PC-3 (cell line): ENCODE measurements at regions of chr13 and their contacts with region 1.

Region 1: DNA sequence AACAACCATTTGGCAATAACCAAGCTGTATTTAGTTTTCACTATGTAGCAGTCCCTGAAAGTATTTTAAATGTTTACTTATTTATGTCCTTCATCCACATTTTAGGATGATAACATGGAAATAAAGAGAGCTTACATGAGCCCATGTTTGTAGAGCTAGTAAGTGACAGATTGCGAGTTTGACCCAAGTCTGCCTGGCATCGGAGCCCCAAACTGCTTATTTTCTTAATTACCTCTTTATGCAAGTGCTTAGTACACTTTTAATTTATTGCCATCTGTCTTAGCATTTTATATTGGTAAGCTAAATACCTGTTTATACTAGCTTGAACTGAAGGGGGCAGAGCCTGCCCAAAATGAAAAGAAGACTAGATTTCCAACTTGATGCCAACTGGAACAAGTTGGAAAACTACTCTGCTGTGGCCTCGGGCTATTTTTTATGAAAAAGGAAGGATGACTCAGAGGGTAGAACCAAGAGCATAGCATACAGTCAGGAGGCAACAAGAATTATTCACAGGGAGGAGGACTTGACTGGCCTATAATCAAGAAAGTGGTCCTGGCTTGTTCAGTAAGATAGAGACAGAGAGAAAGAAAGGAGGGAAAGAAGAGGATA is 150.2 kb downstream of the NDFIP2 start:
- DNase-seq: peak; percentile 95
- ATAC-seq: peak; percentile 99
- H3K4me3 ChIP-seq: no peak overlapping the region
- H3K27ac ChIP-seq: no peak overlapping the region
- H3K4me1 ChIP-seq: peaks cover 4% of the 10 kb centered on the region; the same call in 1 of the 2 replicates
- H3K27me3 ChIP-seq: no peaks in the 10 kb centered on the region
- CTCF ChIP-seq: peak; percentile 70

Region 2: DNA sequence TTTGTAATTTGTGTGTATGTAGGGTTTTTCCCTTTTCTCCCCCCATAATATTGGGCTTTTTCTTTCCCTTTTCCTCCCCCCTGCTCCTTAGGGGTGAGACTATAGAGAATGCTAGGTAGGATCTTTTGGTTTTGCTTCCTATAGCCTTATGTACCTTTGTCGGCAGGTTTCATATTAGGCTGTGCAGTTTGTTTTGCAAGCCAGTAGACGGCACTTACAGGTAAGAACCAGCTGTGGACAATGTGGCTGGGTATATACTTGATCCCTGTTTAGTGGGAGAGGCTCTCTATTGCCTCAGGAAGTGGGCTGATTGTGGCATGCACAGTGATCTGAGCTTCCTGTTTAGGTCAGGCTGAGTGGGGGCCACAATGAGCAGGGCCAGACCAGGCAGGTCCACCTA is 613.0 kb before region 1 on chr13:
- CTCF ChIA-PET with region 1: no interaction called
- POLR2A ChIA-PET with region 1: no interaction called
- intact Hi-C with region 1: no loop called
- DNase-seq: no peak
- ATAC-seq: no peak
- H3K4me3 ChIP-seq: no peak overlapping the region
- H3K27ac ChIP-seq: no peak overlapping the region
- H3K4me1 ChIP-seq: no peaks in the 10 kb centered on the region
- H3K27me3 ChIP-seq: 0 out of 2 replicates have a peak, but pooled peaks cover 5% of the 10 kb centered on the region
- CTCF ChIP-seq: 0 out of 2 replicates have a peak, but pooled peaks have one; percentile 12

Region 3: GRCh38 chr13:79593641-79594275 is 37.4 kb before region 1 on chr13:
- CTCF ChIA-PET with region 1: no interaction called
- POLR2A ChIA-PET with region 1: no interaction called
- intact Hi-C with region 1: no loop called
- DNase-seq: peak; percentile 40
- ATAC-seq: peak; percentile 19; the same call in 1 of the 2 replicates
- H3K4me3 ChIP-seq: no peak overlapping the region
- H3K27ac ChIP-seq: no peak overlapping the region
- H3K4me1 ChIP-seq: 0 out of 2 replicates have a peak, but pooled peaks cover 5% of the 10 kb centered on the region
- H3K27me3 ChIP-seq: no peaks in the 10 kb centered on the region
- CTCF ChIP-seq: no peak

Region 4: DNA sequence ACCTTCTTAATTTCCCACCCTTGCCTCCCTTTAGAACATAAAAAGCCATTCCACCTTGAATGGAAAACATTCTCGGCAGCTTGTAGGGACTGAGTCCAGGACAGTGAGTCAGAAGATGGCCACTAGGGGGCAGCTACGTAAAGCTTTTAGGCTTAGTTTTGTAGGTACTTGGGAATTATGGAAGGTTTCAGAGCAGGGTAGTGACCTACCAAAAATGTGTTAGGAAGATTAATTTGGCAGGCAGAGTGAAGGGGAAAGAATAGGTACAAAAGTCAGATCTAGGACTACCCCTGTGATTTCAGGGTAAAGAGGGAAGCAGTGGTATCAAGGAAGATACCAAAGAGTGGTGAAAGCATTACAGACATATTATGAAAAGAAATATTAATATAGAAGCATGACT is 48.2 kb after region 1 on chr13:
- CTCF ChIA-PET with region 1: interaction called, 4 read pairs
- POLR2A ChIA-PET with region 1: no interaction called
- intact Hi-C with region 1: loop called (anchors 2 kb)
- DNase-seq: peak; percentile 76
- ATAC-seq: peak; percentile 66
- H3K4me3 ChIP-seq: no peak overlapping the region
- H3K27ac ChIP-seq: no peak overlapping the region
- H3K4me1 ChIP-seq: peaks cover 11% of the 10 kb centered on the region; the same call in 1 of the 2 replicates
- H3K27me3 ChIP-seq: no peaks in the 10 kb centered on the region
- CTCF ChIP-seq: peak; percentile 86

Region 5: DNA sequence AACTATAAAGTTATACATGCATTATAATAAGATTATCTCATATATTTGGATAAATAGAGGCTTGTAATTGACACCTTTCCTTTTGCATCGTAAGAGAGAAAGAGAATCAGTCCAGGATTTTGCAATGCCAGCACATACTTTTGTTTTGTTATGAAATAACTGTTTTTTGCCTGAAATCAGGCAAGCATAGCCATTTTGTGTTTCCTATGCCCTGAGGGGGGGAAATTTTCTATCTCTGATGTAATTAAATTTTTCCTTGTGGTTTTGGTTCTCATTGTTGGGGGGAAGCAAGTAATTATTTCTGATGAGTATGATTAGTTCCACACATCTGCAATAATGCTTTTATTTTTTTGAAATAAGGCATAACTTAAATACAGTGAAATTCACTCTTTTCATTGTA is 79.2 kb after region 1 on chr13:
- CTCF ChIA-PET with region 1: no interaction called
- POLR2A ChIA-PET with region 1: no interaction called
- intact Hi-C with region 1: no loop called
- DNase-seq: no peak
- ATAC-seq: no peak
- H3K4me3 ChIP-seq: no peak overlapping the region
- H3K27ac ChIP-seq: no peak overlapping the region
- H3K4me1 ChIP-seq: no peaks in the 10 kb centered on the region
- H3K27me3 ChIP-seq: no peaks in the 10 kb centered on the region
- CTCF ChIP-seq: no peak

Region 6: DNA sequence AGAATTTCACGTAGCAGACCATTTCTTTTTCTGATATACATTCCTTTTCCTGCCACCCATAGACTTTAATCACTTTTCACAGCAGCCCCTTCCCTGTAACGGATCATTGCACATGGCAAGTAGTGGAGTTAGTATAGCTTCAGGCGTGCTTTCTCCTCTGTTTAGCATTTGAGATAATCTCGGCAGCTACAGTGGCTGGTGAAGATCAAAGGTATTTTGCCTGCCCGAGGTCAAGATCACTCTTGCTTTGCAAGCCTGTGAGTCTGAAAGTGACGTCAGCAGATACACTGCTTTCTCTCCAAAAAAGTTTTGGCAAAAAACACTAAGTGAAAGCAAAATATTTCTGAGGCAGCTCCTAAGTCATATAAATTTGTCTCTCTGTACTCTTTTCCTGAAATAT is 109.8 kb after region 1 on chr13:
- CTCF ChIA-PET with region 1: no interaction called
- POLR2A ChIA-PET with region 1: no interaction called
- intact Hi-C with region 1: no loop called
- DNase-seq: no peak
- ATAC-seq: no peak
- H3K4me3 ChIP-seq: no peak overlapping the region
- H3K27ac ChIP-seq: no peak overlapping the region
- H3K4me1 ChIP-seq: peaks cover 8% of the 10 kb centered on the region
- H3K27me3 ChIP-seq: no peaks in the 10 kb centered on the region
- CTCF ChIP-seq: no peak

Region 7: GRCh38 chr13:80030491-80030890 is 399.3 kb after region 1 on chr13:
- CTCF ChIA-PET with region 1: no interaction called
- POLR2A ChIA-PET with region 1: no interaction called
- intact Hi-C with region 1: loop called (anchors 2 kb)
- DNase-seq: peak; percentile 88
- ATAC-seq: peak; percentile 98
- H3K4me3 ChIP-seq: no peak overlapping the region
- H3K27ac ChIP-seq: peak overlapping the region; percentile 69
- H3K4me1 ChIP-seq: peaks cover 23% of the 10 kb centered on the region
- H3K27me3 ChIP-seq: no peaks in the 10 kb centered on the region
- CTCF ChIP-seq: peak; percentile 64

Region 8: DNA sequence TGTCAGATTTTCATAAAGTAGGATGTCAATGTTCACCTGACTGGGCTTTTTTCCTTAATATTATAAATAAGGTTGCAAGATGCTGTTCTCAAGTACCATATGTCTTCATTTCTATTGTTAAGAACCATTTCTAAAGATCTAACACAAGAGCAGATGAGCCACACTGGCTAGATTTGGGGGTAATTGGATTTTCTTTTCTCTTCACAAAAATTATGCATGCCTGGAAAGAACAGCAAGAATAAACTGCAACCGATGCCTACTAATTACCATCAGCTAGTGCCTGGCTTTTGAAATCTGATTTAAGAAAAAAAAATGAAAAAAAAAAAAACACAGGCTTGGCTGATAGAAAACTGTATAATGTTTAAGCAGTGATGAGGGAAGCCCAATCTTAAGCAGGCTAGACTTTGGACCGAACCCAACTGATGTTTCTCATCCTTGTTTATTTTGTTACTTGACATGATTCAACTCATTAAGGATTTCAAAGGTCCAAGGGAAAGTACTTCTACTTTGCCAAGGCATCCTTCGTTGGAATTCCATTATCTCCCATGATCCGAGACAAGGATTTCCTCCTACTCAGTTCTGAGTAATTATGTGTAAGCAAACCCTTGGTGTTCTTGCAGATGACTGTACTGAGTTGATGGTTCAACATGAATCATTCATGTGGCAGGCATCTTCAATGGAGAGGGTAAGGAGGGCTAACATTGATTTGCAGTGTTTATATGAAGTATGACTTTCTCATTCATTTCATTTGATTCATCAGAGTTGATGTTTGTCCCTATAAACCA is 409.2 kb after region 1 on chr13:
- CTCF ChIA-PET with region 1: no interaction called
- POLR2A ChIA-PET with region 1: no interaction called
- intact Hi-C with region 1: loop called (anchors 1 kb)
- DNase-seq: peak; percentile 95
- ATAC-seq: peak; percentile 87
- H3K4me3 ChIP-seq: no peak overlapping the region
- H3K27ac ChIP-seq: peak overlapping the region; percentile 91
- H3K4me1 ChIP-seq: peaks cover 50% of the 10 kb centered on the region
- H3K27me3 ChIP-seq: no peaks in the 10 kb centered on the region
- CTCF ChIP-seq: no peak

Region 9: DNA sequence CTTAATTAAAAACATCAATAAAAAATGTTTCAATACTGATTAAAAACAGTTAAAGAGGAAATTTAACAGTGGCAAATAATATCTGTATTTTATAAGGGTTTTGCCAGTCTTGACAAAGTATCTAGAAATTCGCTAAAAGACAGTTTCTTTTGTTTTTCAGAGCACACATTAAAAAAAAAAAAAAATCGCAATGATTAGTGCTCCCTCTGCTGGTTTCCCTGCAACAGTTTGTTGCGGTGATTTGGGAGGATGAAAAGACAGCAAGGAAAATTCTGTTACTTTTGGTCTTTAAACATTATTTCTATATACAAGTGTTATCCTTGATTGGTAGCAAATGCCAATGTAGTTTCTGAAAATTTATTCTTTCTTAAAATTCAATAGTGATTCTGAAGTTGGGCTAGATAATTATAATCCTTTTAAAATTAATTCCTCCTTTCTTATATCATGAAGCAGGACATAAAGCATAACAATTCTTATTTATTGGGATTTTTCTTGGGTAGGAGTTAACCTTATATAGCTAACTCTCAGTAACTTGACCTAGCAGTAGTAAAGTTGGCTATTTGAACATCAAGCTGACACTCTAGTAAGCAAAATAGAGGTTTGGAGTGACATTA is 732.8 kb after region 1 on chr13:
- CTCF ChIA-PET with region 1: no interaction called
- POLR2A ChIA-PET with region 1: no interaction called
- intact Hi-C with region 1: loop called (anchors 2 kb)
- DNase-seq: peak; percentile 49
- ATAC-seq: no peak
- H3K4me3 ChIP-seq: 0 out of 2 replicates have a peak overlapping the region, but pooled peaks have one; percentile 23
- H3K27ac ChIP-seq: no peak overlapping the region
- H3K4me1 ChIP-seq: peaks cover 7% of the 10 kb centered on the region; the same call in 1 of the 2 replicates
- H3K27me3 ChIP-seq: no peaks in the 10 kb centered on the region
- CTCF ChIP-seq: peak; percentile 80

Region 10: DNA sequence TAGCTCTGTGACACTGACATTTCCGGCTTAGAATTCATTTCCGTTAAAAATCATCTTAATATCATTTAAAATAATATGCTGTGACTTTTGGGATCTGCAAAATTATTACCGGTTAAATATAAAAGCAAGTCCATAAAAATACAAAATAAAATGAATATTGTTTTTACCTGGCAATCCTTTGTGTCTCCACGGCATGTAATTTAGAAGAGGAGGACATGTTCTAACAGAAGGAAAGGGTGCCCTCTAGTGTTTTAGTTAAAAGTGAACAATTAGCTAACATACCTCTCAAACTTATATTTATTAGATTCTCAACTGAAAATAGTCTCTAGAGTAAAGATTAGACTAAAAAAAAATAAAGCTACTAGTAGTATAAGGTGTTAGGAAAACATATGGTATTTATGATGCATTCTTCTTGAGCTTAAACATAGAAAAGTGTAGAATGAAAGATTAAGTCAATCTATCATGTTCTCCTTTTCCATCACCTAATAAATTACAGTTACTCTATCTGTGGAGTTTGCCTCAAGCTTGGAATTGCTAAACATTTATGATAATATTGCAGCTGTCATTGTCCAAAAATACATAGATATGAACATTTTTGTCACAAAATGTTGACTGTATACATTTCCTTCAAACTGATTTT is 1386.5 kb after region 1 on chr13:
- CTCF ChIA-PET with region 1: interaction called, 7 read pairs
- POLR2A ChIA-PET with region 1: no interaction called
- intact Hi-C with region 1: loop called (anchors 5 kb)
- DNase-seq: peak; percentile 61
- ATAC-seq: peak; percentile 55
- H3K4me3 ChIP-seq: no peak overlapping the region
- H3K27ac ChIP-seq: no peak overlapping the region
- H3K4me1 ChIP-seq: no peaks in the 10 kb centered on the region
- H3K27me3 ChIP-seq: no peaks in the 10 kb centered on the region
- CTCF ChIP-seq: peak; percentile 67